ENCODE measurements at regions of chr19 and their contacts with region 1.

Region 1: GRCh38 chr19:43519436-43520088 is 7.4 kb downstream of the ETHE1 start:
- DNase-seq: peak; percentile 85
- H3K4me3 ChIP-seq: no peak overlapping the region
- CTCF ChIP-seq: peak; percentile 81

Region 2: DNA sequence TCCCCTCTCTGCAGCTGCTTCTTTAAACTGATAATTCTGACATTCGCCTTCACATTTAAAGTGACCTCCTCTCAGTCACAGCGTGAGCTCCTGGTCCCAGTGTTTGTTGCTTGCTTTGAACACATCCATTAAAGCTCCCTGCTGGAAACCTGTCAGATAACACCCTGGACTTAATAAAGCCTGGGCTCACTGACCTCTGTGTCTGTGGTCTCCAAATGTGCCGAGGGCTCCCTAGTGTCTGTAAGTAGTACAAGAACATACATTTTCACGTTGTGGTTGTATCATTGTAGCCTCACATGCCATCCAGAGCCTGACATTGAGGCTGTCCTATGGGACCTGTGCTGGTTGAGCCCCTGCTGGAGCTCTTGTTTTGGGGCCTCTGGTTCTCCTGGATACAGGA is 311.6 kb before region 1 on chr19:
- CTCF ChIA-PET with region 1: no interaction called
- POLR2A ChIA-PET with region 1: no interaction called
- DNase-seq: no peak
- H3K4me3 ChIP-seq: no peak overlapping the region
- CTCF ChIP-seq: no peak

Region 3: DNA sequence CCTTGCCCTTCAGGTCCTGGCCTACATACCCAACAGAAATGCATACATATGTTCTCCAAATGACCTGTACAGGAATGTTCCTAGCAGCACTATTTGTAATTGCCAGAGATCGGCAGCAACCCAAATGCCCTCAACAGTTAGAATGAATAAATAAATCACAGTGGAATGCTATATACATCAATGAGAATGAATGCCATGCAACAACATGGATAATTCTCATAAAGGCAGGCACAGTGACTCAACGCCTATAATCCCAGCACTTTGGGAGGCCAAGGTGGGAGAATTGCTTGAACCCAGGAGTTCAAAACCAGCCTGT is 86.2 kb before region 1 on chr19:
- CTCF ChIA-PET with region 1: interaction called, 67 read pairs
- POLR2A ChIA-PET with region 1: no interaction called
- DNase-seq: no peak
- H3K4me3 ChIP-seq: no peak overlapping the region
- CTCF ChIP-seq: no peak

Region 4: GRCh38 chr19:43457809-43458208 is 61.8 kb before region 1 on chr19:
- CTCF ChIA-PET with region 1: interaction called, 27 read pairs
- POLR2A ChIA-PET with region 1: no interaction called
- DNase-seq: no peak
- H3K4me3 ChIP-seq: no peak overlapping the region
- CTCF ChIP-seq: no peak

Region 5: GRCh38 chr19:43495082-43495481 is 24.5 kb before region 1 on chr19:
- CTCF ChIA-PET with region 1: interaction called, 13 read pairs
- POLR2A ChIA-PET with region 1: no interaction called
- DNase-seq: no peak
- H3K4me3 ChIP-seq: no peak overlapping the region
- CTCF ChIP-seq: no peak

Region 6: GRCh38 chr19:43532962-43533545 is 13.5 kb after region 1 on chr19 and contains the start of gene ZNF575:
- CTCF ChIA-PET with region 1: interaction called, 26 read pairs
- POLR2A ChIA-PET with region 1: interaction called, 6 read pairs
- DNase-seq: peak; percentile 79
- H3K4me3 ChIP-seq: peak within 1 kb of the TSS; percentile 66
- CTCF ChIP-seq: no peak